Sigmoid colon (tissue), 7 donors: ENCODE measurements at regions of chr11 and their contacts with region 1.

Region 1: DNA sequence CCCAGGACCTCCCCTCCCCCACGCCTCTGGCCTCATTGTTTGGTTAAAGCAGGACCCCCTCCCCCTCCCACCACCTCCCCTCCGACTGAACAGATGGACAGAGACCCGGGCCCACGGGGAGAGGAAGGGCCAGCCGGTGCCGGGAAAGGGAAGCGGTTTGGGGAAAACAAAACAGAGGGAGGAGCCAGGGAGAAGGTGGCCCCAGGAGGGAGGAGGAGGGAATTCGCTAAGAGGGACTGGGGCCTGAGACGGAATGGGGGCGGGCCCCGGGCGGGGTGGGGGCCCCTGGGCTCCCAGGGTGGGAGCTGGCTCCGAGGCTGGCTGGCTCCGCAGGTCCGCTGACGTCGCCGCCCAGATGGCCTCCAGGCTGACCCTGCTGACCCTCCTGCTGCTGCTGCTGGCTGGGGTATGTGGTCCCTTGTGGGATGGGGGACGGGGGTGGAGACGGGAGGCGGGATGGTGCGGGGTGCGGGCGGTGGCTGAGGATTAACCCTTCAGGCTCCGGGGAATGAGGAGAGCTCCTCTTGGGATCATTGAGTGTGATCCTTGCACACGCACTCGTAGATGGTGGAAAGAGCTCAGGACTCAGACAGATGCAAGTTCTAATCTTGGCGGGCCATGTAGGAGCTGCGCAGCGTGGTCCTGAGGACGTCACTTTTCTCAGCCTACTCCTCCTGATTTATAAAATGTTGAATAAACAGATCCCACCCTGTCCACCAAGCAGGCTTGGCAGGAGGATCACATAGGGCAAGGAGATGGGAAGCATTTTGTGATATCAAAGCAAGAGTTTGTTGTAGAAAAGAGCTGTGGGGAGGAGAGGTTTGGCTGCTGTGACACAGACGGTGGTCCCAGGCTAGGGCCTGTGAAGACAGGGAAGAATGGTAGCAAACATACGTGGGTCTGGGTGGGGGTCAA is 688 bp downstream of the SERPING1 start:
- DNase-seq: peak; percentile 95
- H3K4me3 ChIP-seq: peak overlapping the region; percentile 48 to 76 (median 64)
- H3K27ac ChIP-seq: peak overlapping the region; percentile 79 to 93 (median 89)
- H3K4me1 ChIP-seq: peaks cover 0 to 22% (median 13%) of the 10 kb centered on the region in 4 donors
- H3K27me3 ChIP-seq: no peaks in the 10 kb centered on the region
- CTCF ChIP-seq: no peak
- EP300 ChIP-seq: no peak
- POLR2A ChIP-seq: no peak

Region 2: GRCh38 chr11:57303990-57304579 is 294.1 kb before region 1 on chr11:
- intact Hi-C with region 1: no loop called
- DNase-seq: peak; percentile 67
- H3K4me3 ChIP-seq: no peak overlapping the region
- H3K27ac ChIP-seq: peak overlapping the region in 1 of 4 donors; percentile 41
- H3K4me1 ChIP-seq: peaks cover 0 to 32% (median 19%) of the 10 kb centered on the region in 4 donors
- H3K27me3 ChIP-seq: no peaks in the 10 kb centered on the region
- CTCF ChIP-seq: no peak
- EP300 ChIP-seq: no peak
- POLR2A ChIP-seq: no peak

Region 3: DNA sequence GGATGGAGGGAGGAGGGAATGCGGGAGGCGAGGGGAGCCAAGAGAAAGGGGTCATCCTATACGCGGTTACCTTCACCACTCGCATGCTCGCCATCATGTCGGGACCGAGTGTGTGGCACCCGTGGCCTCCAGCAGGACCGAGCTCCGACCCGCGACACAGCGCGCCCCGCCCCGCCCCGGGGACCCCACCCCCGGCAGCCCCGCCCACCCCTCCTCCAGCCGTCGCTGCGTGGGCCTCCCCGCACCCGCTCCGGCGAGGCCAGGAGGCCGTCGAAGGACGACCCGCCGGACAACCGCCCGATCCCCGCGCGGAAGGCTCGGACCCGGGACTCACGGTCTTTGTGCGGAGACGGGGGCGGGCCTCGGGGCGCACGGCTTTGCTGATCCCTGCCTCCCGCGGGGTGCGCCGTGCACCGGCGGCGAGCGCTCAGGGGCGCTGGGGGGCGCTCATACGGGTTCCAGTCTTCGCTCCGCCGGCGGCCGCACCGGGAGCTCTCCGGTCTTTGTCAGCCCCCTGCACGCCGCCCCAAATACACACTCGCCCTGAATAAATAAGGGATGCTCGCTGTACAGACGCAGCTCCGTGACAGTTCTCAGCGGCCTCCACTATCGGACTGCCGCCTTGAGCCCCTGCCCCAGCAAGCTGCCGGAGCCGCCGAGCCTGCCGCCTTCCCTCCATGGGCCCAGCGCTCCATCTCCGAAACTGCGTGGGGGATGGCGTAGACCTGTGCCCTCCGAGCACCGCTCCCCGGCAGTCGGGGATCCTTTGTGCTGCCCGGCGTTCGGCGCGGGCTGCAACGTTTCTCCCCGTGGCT is 30.5 kb before region 1 on chr11 and contains the start of gene UBE2L6:
- intact Hi-C with region 1: loop called (anchors 2 kb)
- DNase-seq: peak; percentile 74
- H3K4me3 ChIP-seq: peak within 1 kb of the TSS; percentile 66 to 94 (median 76)
- H3K27ac ChIP-seq: peak within 1 kb of the TSS; percentile 83 to 86 (median 85)
- H3K4me1 ChIP-seq: peaks cover 0 to 26% (median 19%) of the 10 kb centered on the region in 4 donors
- H3K27me3 ChIP-seq: no peaks in the 10 kb centered on the region
- CTCF ChIP-seq: peak in 2 of 4 experiments; percentile 82 to 92
- EP300 ChIP-seq: no peak
- POLR2A ChIP-seq: no peak
- total RNA-seq, gene UBE2L6: 26.5 to 37.8 (median 32.5) TPM